Ascending aorta (tissue), 2 donors: ENCODE measurements at regions of chr16 and their contacts with region 1.

Region 1: GRCh38 chr16:30984669-30985400 is at the start of gene HSD3B7:
- DNase-seq: peak; percentile 69 to 95
- H3K4me3 ChIP-seq: peak within 1 kb of the TSS; percentile 43 to 59
- H3K27ac ChIP-seq: peak within 1 kb of the TSS; percentile 14 to 50
- H3K4me1 ChIP-seq: peaks cover 3 to 11% of the 10 kb centered on the region in 2 donors
- H3K27me3 ChIP-seq: no peaks in the 10 kb centered on the region
- CTCF ChIP-seq: peak; percentile 94 to 95 (median 95)
- total RNA-seq, gene HSD3B7: 35.2 TPM

Region 2: GRCh38 chr16:30747799-30748634 is 236.8 kb before region 1 on chr16 and contains the start of gene PHKG2:
- intact Hi-C with region 1: no loop called
- DNase-seq: peak; percentile 97 to 99
- H3K4me3 ChIP-seq: peak within 1 kb of the TSS; percentile 84 to 99
- H3K27ac ChIP-seq: peak within 1 kb of the TSS; percentile 87
- H3K4me1 ChIP-seq: peaks cover 7 to 8% of the 10 kb centered on the region in 2 donors
- H3K27me3 ChIP-seq: no peaks in the 10 kb centered on the region
- CTCF ChIP-seq: no peak
- total RNA-seq, gene PHKG2: 78.8 TPM

Region 3: GRCh38 chr16:30972872-30973271 is 12.0 kb before region 1 on chr16:
- intact Hi-C with region 1: no loop called
- DNase-seq: no peak
- H3K4me3 ChIP-seq: no peak overlapping the region
- H3K27ac ChIP-seq: no peak overlapping the region
- H3K4me1 ChIP-seq: no peaks in the 10 kb centered on the region
- H3K27me3 ChIP-seq: no peaks in the 10 kb centered on the region
- CTCF ChIP-seq: no peak

Region 4: DNA sequence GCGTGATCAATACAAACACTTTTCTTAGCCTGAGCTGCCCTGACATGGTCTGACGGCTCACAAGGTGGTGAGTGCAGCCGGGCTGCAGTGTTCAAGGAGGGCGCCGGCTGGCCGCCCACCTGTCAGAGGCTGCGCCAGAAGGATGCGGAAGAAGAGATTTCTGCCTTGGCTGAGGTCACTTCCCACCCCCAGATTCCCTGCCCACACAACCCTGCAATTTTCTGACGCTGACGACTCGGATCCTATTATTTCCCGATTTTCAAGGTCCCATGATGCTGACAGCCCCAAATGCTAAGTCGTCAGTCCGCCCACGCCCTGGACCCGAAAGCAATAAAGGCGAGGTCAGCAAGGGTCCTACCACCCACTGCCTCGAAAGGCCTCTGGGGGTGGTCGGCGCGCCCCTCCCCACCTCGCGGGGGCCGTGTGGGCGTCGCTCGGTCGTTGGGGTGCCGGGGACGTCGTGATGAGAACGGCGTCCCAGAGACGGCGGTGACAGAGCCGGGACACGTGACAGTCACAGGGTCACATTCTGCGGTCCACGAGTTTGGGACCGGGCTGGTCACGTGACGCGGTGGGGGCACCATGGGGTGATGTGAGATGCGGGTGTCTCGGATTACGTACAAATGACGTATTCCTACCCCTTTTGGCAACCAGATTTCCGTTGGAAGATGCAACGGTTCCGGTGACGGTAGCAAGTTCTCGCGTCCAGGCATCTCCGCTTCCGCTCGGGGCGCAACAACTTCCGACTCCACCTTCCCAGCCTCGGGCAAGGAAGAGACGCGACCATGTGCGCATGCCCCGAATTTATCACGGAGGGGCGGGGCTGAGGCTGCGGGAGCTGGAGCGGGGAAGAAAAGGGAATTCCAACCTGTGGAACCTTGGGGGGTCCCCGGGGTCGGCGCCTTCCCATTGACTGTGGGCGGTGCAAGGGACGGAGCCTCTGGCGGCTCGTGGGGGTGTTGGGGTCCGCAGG is 48.2 kb after region 1 on chr16 and contains the start of gene STX4:
- intact Hi-C with region 1: loop called (anchors 1 kb)
- DNase-seq: peak; percentile 88 to 99
- H3K4me3 ChIP-seq: peak within 1 kb of the TSS; percentile 83 to 99
- H3K27ac ChIP-seq: peak within 1 kb of the TSS; percentile 92 to 99
- H3K4me1 ChIP-seq: peaks cover 3 to 10% of the 10 kb centered on the region in 2 donors
- H3K27me3 ChIP-seq: no peaks in the 10 kb centered on the region
- CTCF ChIP-seq: no peak
- total RNA-seq, gene STX4: 79.1 TPM

Region 5: DNA sequence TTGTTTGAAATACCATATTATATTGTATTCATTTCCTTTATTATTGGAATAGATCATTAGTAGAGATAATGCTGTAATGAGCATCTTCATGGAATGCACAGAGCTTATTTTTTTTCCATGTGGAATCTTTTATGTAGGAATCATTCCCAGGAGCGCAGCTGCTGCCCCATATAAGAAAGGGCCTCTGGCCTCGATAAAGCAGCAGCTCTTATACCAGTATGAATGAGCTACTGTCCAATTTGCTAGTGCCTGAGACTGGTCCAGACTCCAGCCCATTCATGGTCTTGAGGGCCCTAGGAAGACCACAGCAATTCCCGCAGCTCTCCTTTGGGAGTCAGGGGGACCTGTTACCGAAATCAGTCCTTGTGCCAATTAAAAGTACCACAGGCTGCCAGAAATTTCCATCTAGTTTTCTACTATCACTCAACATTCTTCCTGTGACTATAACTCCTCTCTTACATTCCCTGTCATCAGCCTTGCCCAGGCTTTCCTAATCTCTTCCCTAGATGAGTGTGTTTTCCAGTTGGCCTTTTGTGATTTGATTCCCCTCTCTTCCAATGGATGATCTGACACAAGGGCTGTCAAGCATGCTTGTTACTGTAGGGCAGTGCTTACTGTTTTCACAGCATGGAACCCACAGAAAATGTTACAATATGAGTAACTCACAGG is 455.8 kb after region 1 on chr16:
- intact Hi-C with region 1: loop called (anchors 1 kb)
- DNase-seq: no peak
- H3K4me3 ChIP-seq: no peak overlapping the region
- H3K27ac ChIP-seq: no peak overlapping the region
- H3K4me1 ChIP-seq: no peaks in the 10 kb centered on the region
- H3K27me3 ChIP-seq: no peaks in the 10 kb centered on the region
- CTCF ChIP-seq: no peak

Region 6: DNA sequence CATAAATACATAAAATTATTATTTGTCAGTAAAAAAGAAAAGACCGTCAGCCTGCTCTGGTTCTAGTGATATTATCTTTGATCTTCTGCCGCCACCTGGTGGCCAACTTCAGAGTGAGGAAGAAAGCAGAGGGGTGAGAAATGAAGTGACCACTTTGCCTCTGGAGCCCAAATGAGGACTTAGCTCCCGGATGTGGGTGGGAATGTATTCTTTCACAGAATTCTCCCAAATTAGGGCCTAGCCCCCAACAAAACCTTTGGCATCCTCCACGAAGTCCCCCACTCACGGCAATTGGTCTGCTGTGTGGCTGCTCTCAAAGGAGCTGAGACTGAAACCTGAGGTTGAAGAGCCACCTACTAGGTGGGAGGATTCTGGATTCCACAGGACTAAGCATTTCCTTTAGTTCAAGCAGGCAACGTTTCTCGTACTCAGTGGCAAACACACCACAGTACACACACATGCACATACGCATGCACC is 883.9 kb after region 1 on chr16:
- intact Hi-C with region 1: loop called (anchors 1 kb)
- DNase-seq: peak; percentile 31 to 93
- H3K4me3 ChIP-seq: no peak overlapping the region
- H3K27ac ChIP-seq: no peak overlapping the region
- H3K4me1 ChIP-seq: peaks cover 3 to 5% of the 10 kb centered on the region in 2 donors
- H3K27me3 ChIP-seq: no peaks in the 10 kb centered on the region
- CTCF ChIP-seq: peak; percentile 73 to 80 (median 78)